ENCODE measurements at regions of chr12 and their contacts with region 1.

Region 1: GRCh38 chr12:121678716-121679580 is 9.5 kb upstream of the MORN3 start:
- DNase-seq: no peak

Region 2: GRCh38 chr12:121550974-121551634 is 127.8 kb before region 1 on chr12:
- intact Hi-C with region 1: loop called (anchors 1 kb)
- DNase-seq: no peak

Region 3: DNA sequence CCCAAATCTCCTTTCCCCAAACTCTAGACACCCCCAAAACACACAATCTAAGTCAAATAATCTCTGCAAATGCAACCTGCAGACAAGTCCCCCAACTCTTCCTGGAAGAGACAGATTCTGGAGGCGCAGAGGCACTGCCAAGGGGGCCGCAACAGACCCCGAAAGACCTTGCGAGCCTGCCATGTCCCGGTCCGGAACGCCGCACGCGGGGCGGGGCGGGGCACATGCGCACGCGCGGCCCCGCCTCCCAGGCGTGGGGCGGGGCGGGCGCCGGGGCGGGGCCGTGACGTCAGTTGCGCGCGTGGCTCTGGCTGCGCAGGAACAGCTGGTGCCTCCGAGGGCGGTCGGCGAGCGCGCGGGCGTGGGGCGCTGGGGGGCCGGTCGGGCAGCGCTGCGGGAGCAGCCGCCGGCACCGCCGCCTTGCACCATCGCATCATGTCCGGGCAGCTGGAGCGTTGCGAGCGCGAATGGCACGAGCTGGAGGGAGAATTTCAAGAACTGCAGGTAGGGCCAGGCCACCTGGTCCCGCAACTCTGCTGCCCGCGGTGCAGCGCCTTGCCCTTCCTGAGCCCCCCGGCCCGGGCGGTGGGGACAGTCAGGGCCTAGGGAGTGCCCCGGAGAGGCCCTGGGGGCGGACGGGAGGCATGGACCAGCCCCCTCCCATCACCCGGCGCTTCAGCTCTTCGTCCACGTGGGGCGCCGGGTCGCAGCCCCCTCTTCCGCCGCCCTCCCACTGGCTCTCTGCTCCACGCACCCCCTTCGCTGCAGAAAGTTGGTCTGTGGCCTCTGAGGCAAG is 33.7 kb after region 1 on chr12 and contains the start of gene TMEM120B:
- intact Hi-C with region 1: no loop called
- DNase-seq: peak; percentile 76 to 98 (median 86)

Region 4: DNA sequence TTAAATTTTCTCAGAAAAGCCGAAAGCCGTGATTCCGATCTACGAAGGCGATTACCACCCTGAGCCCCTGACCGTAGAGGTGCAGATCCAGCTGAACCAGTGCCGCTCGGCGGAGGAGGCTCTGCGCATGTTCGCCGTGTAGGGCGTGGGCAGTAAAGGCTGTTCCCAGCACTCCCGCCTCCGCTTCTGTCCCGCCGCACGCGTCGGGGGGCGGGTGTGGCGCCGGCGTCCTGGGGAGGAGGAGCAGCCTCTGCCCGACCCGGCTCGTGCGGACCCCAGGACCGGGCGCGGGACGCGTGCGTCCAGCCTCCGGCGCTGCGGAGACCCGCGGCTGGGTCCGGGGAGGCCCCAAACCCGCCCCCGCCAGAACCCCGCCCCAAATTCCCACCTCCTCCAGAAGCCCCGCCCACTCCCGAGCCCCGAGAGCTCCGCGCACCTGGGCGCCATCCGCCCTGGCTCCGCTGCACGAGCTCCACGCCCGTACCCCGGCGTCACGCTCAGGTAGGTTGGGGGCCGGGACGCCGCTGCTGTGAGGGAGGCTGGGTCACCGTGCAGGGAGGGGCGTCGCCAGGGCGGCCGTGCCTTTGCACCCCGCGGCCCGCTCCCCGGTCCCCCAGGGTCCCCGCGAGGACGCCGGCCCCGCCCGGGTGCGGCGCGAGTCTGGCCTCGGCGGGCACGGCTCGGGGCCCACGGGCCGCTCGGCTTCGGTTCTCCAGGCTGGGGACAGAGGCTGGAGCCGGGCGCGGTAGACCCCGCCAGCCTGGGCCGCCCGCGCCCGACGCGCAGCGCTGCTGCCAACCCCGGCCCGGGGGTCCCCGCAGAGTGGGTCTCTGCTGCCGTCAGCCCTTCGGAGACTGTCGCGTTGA is 524.6 kb after region 1 on chr12 and contains the start of gene B3GNT4:
- intact Hi-C with region 1: no loop called
- DNase-seq: peak in 9 of 10 donors; percentile 36 to 96 (median 68)

Measured in posterior cingulate gyrus (tissue), 11 donors.